ENCODE measurements at regions of chr22 and their contacts with region 1.

Region 1: GRCh38 chr22:35349704-35350538 is 31.0 kb upstream of the HMOX1 start:
- DNase-seq: no peak
- H3K4me3 ChIP-seq: no peak overlapping the region
- CTCF ChIP-seq: no peak
- POLR2A ChIP-seq: no peak

Region 2: GRCh38 chr22:35589071-35589952 is 239.4 kb after region 1 on chr22:
- intact Hi-C with region 1: loop called (anchors 5 kb)
- DNase-seq: no peak
- H3K4me3 ChIP-seq: no peak overlapping the region
- CTCF ChIP-seq: no peak
- POLR2A ChIP-seq: no peak

Measured in lower leg skin (tissue), 4 donors.